Ovary (tissue), 10 donors: ENCODE measurements at regions of chr17 and their contacts with region 1.

Region 1: DNA sequence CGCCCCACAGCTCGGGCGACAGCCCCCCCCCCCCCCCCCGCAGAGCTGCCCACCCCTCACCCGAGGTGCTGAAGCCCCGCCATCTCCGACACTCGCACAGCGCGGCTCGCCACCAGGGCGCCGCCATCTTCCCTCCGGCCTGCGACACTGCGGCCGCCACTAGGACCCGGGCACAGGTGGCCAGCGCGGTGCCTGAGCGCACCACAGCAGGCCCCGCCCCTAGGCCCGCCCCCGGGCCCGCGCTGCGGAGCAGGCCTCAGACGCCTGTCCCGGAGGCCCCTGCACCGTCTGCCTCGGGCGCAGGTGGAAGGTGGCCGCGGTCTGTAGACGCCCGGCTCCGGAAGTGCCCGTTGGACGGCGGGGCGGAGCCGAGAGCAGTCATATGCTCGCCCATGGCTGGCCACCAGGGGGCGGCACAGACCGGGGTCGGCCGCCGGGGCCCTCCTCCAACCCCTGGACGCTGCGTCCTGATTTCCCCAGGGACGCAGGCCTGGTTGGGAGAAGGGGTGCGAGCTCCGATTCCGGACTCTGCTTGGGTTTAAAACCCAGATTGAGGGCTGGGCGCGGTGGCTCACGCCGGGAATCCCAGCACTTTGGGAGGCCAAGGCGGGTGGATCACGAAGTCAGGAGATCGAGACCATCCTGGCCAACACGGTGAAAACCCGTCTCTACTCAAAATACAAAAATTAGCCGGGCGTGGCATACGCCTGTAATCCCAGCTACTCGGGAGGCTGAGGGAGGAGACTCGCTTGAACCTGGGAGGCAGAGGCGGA is at the start of gene MRPL38:
- DNase-seq: peak; percentile 93 to 95 (median 94)
- H3K4me3 ChIP-seq: peak within 1 kb of the TSS; percentile 71
- H3K27ac ChIP-seq: peak within 1 kb of the TSS; percentile 81 to 86
- H3K4me1 ChIP-seq: peaks cover 2% of the 10 kb centered on the region
- H3K27me3 ChIP-seq: no peaks in the 10 kb centered on the region
- CTCF ChIP-seq: peak; percentile 98 to 100 (median 100)
- EP300 ChIP-seq: no peak
- POLR2A ChIP-seq: peak; percentile 66
- total RNA-seq, gene MRPL38: 30.4 to 93.0 (median 83.4) TPM

Region 2: DNA sequence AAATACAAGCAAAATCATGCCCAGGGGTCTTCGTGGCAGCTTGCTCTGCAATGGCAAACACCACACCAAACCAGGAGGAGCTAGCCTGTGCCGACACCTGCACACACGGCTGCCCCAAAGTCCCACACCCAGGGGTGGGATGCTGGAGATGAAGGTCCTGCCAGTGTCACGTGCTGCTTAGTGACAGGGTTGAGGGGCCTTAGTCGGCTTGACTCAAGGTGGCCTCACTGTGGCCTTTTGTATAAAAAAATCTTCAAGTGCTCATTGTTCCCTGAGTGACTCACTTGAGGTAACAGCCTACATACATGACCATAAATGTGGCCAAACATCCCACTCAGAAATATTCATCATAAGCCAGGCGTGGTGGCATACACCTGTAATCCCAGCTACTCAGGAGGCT is 15.5 kb before region 1 on chr17:
- intact Hi-C with region 1: no loop called
- DNase-seq: no peak
- H3K4me3 ChIP-seq: no peak overlapping the region
- H3K27ac ChIP-seq: no peak overlapping the region
- H3K4me1 ChIP-seq: no peaks in the 10 kb centered on the region
- H3K27me3 ChIP-seq: no peaks in the 10 kb centered on the region
- CTCF ChIP-seq: no peak
- EP300 ChIP-seq: no peak
- POLR2A ChIP-seq: no peak

Region 3: GRCh38 chr17:75978938-75979704 is 74.2 kb after region 1 on chr17 and contains the starts of genes ACOX1 and TEN1:
- intact Hi-C with region 1: loop called in 1 of 4 experiments (anchors 2 kb)
- DNase-seq: peak; percentile 97 to 98 (median 98)
- H3K4me3 ChIP-seq: peak within 1 kb of the TSS; percentile 74
- H3K27ac ChIP-seq: peak within 1 kb of the TSS; percentile 93 to 98
- H3K4me1 ChIP-seq: peaks cover 1% of the 10 kb centered on the region
- H3K27me3 ChIP-seq: no peaks in the 10 kb centered on the region
- CTCF ChIP-seq: peak; percentile 26 to 69 (median 63)
- EP300 ChIP-seq: no peak
- POLR2A ChIP-seq: peak; percentile 90
- total RNA-seq, gene ACOX1: 20.1 to 53.0 (median 41.1) TPM
- total RNA-seq, gene TEN1: 7.4 to 16.3 (median 10.5) TPM

Region 4: DNA sequence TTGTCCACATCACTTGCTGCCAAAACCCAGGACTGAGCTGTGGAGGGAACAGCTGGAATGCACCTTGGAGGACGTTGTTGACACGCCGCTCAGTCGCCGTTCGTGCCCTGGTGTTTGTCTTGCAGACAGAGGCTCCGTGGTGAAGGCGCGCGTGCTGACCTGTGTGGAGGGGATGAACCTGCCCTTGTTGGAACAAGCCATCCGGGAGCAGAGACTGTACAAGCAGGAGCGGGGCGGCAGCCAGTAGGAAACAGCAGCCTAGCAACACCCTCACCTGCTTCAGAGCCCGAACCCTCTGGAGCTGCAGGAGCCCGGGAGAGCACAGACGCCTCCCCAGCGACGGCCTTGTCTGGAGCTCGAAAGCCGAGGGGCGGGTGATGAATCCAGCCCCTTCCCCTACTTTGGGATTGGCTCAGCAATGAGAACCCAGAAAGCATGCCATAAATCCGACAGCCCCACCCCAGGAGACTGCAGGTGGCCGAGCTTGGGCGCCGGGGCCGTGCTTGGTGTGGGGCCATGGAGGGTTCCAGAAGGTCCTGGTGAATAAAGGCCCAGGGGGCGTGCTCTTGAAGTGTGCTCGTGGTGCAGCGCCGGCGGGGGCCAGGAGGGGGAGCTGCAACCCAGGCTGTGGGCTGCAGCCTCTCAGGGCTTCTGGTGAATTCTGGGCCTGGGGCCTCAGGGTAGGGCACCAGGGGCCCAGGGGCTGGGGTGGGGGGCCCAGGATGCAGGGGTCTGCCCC is 95.2 kb after region 1 on chr17:
- intact Hi-C with region 1: loop called in 3 of 4 experiments (anchors 2 to 5 kb)
- DNase-seq: peak in 2 of 5 donors; percentile 60 to 70
- H3K4me3 ChIP-seq: no peak overlapping the region
- H3K27ac ChIP-seq: no peak overlapping the region
- H3K4me1 ChIP-seq: peaks cover 11% of the 10 kb centered on the region
- H3K27me3 ChIP-seq: no peaks in the 10 kb centered on the region
- CTCF ChIP-seq: peak; percentile 23 to 35 (median 24)
- EP300 ChIP-seq: no peak
- POLR2A ChIP-seq: no peak

Region 5: DNA sequence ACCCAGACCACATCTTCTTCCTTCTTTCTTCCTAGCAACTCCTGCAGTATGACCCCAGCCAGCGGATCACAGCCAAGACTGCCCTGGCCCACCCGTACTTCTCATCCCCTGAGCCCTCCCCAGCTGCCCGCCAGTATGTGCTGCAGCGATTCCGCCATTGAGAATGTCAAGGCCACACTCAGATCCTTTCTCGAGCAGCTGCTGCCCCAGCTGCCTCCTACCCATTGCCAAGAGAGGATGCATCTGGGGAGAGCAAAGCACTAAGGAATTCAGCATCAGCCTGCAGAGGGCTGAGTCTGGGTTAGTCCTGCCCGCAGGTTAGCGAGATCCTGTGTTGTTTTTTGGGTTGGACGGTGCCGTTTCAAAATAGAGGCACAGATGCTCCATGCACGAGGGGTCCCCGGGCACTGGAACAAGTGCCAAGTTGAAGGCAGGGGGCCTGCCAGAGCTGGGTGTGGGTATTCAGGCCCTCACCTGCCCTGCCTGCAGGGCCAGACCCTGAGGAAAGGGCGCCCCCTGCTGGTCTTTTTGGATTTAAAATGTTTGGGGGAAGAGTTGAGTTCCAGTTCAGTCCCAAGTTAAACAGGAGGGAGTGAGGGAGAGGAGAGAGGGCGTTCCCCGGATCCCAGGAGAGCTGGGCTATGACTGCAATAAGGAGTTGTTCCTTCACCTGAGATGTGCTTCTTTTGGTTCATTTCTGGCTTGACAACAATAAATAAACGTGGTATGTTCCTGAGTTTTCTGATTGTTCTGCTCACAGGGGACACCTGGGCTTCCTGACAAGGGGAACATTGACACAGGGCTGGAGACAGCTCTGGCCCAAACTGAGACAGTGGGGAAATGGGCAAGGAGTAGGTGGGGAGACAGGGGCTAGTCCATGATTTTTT is 100.6 kb after region 1 on chr17:
- intact Hi-C with region 1: loop called (anchors 2 to 5 kb)
- DNase-seq: peak; percentile 87 to 91 (median 89)
- H3K4me3 ChIP-seq: no peak overlapping the region
- H3K27ac ChIP-seq: peak overlapping the region in 1 of 2 donors; percentile 76
- H3K4me1 ChIP-seq: peaks cover 15% of the 10 kb centered on the region
- H3K27me3 ChIP-seq: no peaks in the 10 kb centered on the region
- CTCF ChIP-seq: peak; percentile 81 to 93 (median 92)
- EP300 ChIP-seq: no peak
- POLR2A ChIP-seq: no peak